Activated CD4-positive, alpha-beta memory T cell treated with anti-CD3 and anti-CD28 coated beads for 36 hours (primary cell): ENCODE measurements at regions of chr5 and their contacts with region 1.

Region 1: DNA sequence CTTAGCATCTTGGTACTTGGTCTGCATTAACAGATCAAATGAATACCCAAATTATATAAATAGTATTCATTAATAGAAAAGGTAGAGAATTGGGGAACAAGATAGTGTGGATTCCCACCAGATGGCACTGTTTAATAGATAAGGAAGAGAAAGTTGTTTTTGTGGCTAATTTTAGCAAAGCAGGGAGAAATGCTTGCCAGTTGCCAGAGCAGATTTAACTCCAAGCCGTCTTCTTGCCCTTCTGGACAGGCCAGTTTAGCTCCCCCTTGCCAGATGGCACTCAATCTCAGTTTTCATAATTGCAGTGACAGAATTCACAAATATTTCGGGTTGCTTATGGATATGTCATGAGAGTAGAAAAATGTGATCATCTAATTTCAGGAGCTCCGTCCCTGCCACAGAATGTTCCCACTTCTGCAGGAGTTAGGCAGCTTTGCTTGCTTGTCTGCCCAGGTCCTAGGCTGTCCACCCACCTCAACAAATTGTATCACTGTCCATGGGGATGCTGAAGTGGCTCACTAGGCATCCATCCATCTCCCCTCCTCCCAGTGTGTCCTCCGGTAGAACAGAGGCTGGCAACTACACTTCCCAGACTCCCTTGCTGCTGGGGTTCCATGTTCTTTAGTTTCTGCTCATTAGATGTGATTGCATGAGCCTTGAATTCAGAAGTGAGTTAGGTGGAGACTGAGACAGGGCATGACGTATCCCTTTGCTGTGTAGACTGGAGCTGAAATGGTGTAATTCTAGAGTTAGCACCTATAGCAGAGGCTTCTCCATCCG is 11.8 kb upstream of the HEXB start:
- DNase-seq: no peak
- H3K4me3 Mint-ChIP-seq: no peak overlapping the region
- H3K27ac Mint-ChIP-seq: no peak overlapping the region
- H3K4me1 Mint-ChIP-seq: no peaks in the 10 kb centered on the region
- H3K27me3 Mint-ChIP-seq: peaks cover 9% of the 10 kb centered on the region

Region 2: GRCh38 chr5:74798977-74799911 is 126.0 kb after region 1 on chr5:
- CTCF ChIA-PET with region 1: no interaction called
- POLR2A ChIA-PET with region 1: no interaction called
- intact Hi-C with region 1: no loop called
- DNase-seq: no peak
- H3K4me3 Mint-ChIP-seq: no peak overlapping the region
- H3K27ac Mint-ChIP-seq: no peak overlapping the region
- H3K4me1 Mint-ChIP-seq: no peaks in the 10 kb centered on the region
- H3K27me3 Mint-ChIP-seq: no peaks in the 10 kb centered on the region

Region 3: DNA sequence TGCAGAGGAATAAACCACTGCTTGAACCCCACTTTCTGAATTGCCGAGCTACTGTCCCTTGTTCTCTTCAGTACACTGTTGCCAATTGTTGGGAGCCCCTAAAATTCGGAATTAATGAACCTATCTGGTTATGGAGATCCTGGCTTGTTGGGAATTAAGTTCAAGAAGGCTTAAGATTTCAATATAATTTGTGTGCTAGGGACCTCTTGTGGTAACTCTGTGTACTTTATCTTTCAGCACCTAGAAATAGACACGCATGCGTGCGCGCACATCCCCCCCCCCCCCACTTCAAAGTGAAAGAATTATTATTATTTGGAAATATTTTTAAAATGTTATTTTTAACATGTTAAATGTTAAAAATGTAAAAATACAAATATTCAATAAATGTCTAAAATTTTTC is 246.3 kb after region 1 on chr5:
- CTCF ChIA-PET with region 1: interaction called, 10 read pairs
- POLR2A ChIA-PET with region 1: no interaction called
- intact Hi-C with region 1: loop called (anchors 1 kb)
- DNase-seq: no peak
- H3K4me3 Mint-ChIP-seq: no peak overlapping the region
- H3K27ac Mint-ChIP-seq: no peak overlapping the region
- H3K4me1 Mint-ChIP-seq: no peaks in the 10 kb centered on the region
- H3K27me3 Mint-ChIP-seq: no peaks in the 10 kb centered on the region

Region 4: DNA sequence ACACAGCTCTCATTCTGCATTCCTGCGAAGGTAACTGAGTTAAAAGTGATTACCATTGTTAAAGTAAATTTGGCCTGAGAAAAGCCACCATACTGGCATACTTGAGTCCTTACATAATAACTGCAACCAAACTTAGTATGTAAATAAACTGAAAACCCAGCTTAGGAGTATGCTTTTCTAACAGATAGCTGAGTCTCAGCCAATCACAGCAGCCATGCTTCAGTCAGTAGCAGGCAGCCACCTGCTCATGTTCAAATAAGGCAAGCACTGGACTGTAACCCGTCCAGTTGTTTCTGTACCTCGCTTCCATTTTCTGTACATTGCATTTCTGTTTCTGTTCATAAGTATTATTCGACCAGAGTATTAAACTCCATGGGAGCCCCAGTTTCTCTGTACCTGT is 320.5 kb after region 1 on chr5:
- CTCF ChIA-PET with region 1: no interaction called
- POLR2A ChIA-PET with region 1: no interaction called
- intact Hi-C with region 1: no loop called
- DNase-seq: no peak
- H3K4me3 Mint-ChIP-seq: no peak overlapping the region
- H3K27ac Mint-ChIP-seq: no peak overlapping the region
- H3K4me1 Mint-ChIP-seq: no peaks in the 10 kb centered on the region
- H3K27me3 Mint-ChIP-seq: peaks cover 5% of the 10 kb centered on the region

Region 5: GRCh38 chr5:75265731-75266130 is 592.5 kb after region 1 on chr5:
- CTCF ChIA-PET with region 1: no interaction called
- POLR2A ChIA-PET with region 1: no interaction called
- intact Hi-C with region 1: loop called (anchors 10 kb)
- DNase-seq: no peak
- H3K4me3 Mint-ChIP-seq: no peak overlapping the region
- H3K27ac Mint-ChIP-seq: no peak overlapping the region
- H3K4me1 Mint-ChIP-seq: no peaks in the 10 kb centered on the region
- H3K27me3 Mint-ChIP-seq: peaks cover 5% of the 10 kb centered on the region